ENCODE measurements at regions of chr14 and their contacts with region 1.

Region 1: GRCh38 chr14:81269100-81269978 is 48.6 kb upstream of the GTF2A1 start:
- DNase-seq: peak; percentile 46 to 69
- H3K4me3 ChIP-seq: no peak overlapping the region
- H3K4me3 Mint-ChIP-seq: no peak overlapping the region
- H3K27ac Mint-ChIP-seq: peak overlapping the region; percentile 42
- H3K4me1 ChIP-seq: peaks cover 11% of the 10 kb centered on the region
- H3K4me1 Mint-ChIP-seq: peaks cover 7% of the 10 kb centered on the region
- H3K27me3 ChIP-seq: no peaks in the 10 kb centered on the region
- H3K27me3 Mint-ChIP-seq: no peaks in the 10 kb centered on the region
- CTCF ChIP-seq: peak; percentile 73 to 75

Region 2: GRCh38 chr14:81303248-81304221 is 34.2 kb after region 1 on chr14:
- CTCF ChIA-PET with region 1: interaction called, 3 read pairs
- POLR2A ChIA-PET with region 1: no interaction called
- intact Hi-C with region 1: loop called (anchors 1 kb)
- DNase-seq: peak; percentile 91 to 95
- H3K4me3 ChIP-seq: no peak overlapping the region; the same call in 1 of the 2 replicates
- H3K4me3 Mint-ChIP-seq: peak overlapping the region; percentile 66
- H3K27ac Mint-ChIP-seq: peak overlapping the region; percentile 83
- H3K4me1 ChIP-seq: peaks cover 32% of the 10 kb centered on the region
- H3K4me1 Mint-ChIP-seq: peaks cover 39% of the 10 kb centered on the region
- H3K27me3 ChIP-seq: no peaks in the 10 kb centered on the region
- H3K27me3 Mint-ChIP-seq: no peaks in the 10 kb centered on the region
- CTCF ChIP-seq: no peak

Region 3: DNA sequence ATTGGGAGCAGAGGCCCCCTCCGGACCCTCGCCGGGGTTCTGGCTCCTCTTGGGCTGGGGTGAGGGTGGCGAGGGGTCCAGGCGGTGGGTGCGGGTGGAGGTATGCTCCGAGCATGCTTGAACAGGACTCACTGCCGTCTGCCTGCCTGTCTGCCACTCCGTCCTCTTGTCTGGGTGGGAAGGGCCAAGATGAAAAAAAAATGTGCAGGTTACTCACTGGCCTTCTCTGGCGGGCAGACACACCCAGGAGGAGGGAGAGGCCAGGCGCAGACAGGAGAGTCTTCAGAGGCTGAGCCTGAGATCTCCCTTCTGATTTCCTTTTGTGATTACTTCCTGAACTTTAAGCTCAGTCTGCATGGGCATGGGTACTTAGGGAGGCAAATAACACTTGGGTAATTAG is 54.7 kb after region 1 on chr14:
- CTCF ChIA-PET with region 1: no interaction called
- POLR2A ChIA-PET with region 1: no interaction called
- intact Hi-C with region 1: loop called (anchors 1 kb)
- DNase-seq: peak; percentile 73 to 80
- H3K4me3 ChIP-seq: peak overlapping the region; percentile 57
- H3K4me3 Mint-ChIP-seq: peak overlapping the region; percentile 77
- H3K27ac Mint-ChIP-seq: peak overlapping the region; percentile 4
- H3K4me1 ChIP-seq: peaks cover 27% of the 10 kb centered on the region
- H3K4me1 Mint-ChIP-seq: peaks cover 24% of the 10 kb centered on the region
- H3K27me3 ChIP-seq: no peaks in the 10 kb centered on the region
- H3K27me3 Mint-ChIP-seq: no peaks in the 10 kb centered on the region
- CTCF ChIP-seq: peak in 1 of 2 experiments; percentile 3

Region 4: GRCh38 chr14:81453166-81453766 is 183.9 kb after region 1 on chr14:
- CTCF ChIA-PET with region 1: interaction called, 43 read pairs
- POLR2A ChIA-PET with region 1: no interaction called
- intact Hi-C with region 1: loop called (anchors 1 kb)
- DNase-seq: peak; percentile 52 to 69
- H3K4me3 ChIP-seq: no peak overlapping the region
- H3K4me3 Mint-ChIP-seq: no peak overlapping the region
- H3K27ac Mint-ChIP-seq: no peak overlapping the region
- H3K4me1 ChIP-seq: 0 out of 2 replicates have a peak, but pooled peaks cover 5% of the 10 kb centered on the region
- H3K4me1 Mint-ChIP-seq: no peaks in the 10 kb centered on the region
- H3K27me3 ChIP-seq: no peaks in the 10 kb centered on the region
- H3K27me3 Mint-ChIP-seq: no peaks in the 10 kb centered on the region
- CTCF ChIP-seq: peak; percentile 85 to 88

Region 5: GRCh38 chr14:81464247-81465002 is 195.1 kb after region 1 on chr14:
- CTCF ChIA-PET with region 1: interaction called, 12 read pairs
- POLR2A ChIA-PET with region 1: no interaction called
- intact Hi-C with region 1: loop called (anchors 1 kb)
- DNase-seq: peak in 1 of 2 experiments; percentile 74
- H3K4me3 ChIP-seq: peak overlapping the region; percentile 19
- H3K4me3 Mint-ChIP-seq: peak overlapping the region; percentile 55
- H3K27ac Mint-ChIP-seq: no peak overlapping the region
- H3K4me1 ChIP-seq: no peaks in the 10 kb centered on the region
- H3K4me1 Mint-ChIP-seq: no peaks in the 10 kb centered on the region
- H3K27me3 ChIP-seq: no peaks in the 10 kb centered on the region
- H3K27me3 Mint-ChIP-seq: no peaks in the 10 kb centered on the region
- CTCF ChIP-seq: peak; percentile 68 to 78

Region 6: DNA sequence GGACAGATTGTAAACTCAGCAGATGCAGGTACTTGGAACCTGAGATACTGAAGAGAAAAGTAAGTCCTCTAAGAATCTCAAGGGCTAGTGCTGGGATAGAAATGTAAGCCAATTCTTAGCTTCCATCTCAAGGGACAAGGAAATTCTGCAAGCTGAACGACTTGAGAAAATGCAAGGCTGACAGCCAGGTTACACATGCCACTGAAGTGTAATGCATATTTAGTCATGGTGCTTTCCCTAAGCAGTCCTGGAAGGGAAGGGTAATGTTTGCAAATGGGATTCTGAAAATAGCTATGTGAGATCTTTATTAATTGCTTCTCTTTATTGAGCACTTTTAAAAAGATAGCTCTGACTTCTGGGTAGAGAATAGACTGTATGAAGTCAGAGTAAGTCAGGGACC is 667.0 kb after region 1 on chr14:
- CTCF ChIA-PET with region 1: no interaction called
- POLR2A ChIA-PET with region 1: no interaction called
- intact Hi-C with region 1: no loop called
- DNase-seq: no peak
- H3K4me3 ChIP-seq: no peak overlapping the region
- H3K4me3 Mint-ChIP-seq: no peak overlapping the region
- H3K27ac Mint-ChIP-seq: no peak overlapping the region
- H3K4me1 ChIP-seq: no peaks in the 10 kb centered on the region
- H3K4me1 Mint-ChIP-seq: no peaks in the 10 kb centered on the region
- H3K27me3 ChIP-seq: no peaks in the 10 kb centered on the region
- H3K27me3 Mint-ChIP-seq: peaks cover 2% of the 10 kb centered on the region
- CTCF ChIP-seq: no peak